ENCODE measurements at regions of chr11 and their contacts with region 1.

Region 1: GRCh38 chr11:61733120-61733978 is 19.1 kb upstream of the MYRF start:
- DNase-seq: peak in 1 of 2 experiments; percentile 89
- H3K4me3 ChIP-seq: no peak overlapping the region
- H3K27ac ChIP-seq: no peak overlapping the region
- H3K4me1 ChIP-seq: no peaks in the 10 kb centered on the region
- H3K27me3 ChIP-seq: no peaks in the 10 kb centered on the region
- CTCF ChIP-seq: peak in 2 of 3 experiments; percentile 96 to 99; a peak in 3 of 4 replicates
- EP300 ChIP-seq: no peak
- POLR2A ChIP-seq: no peak
- RAD21 ChIP-seq: peak; percentile 94 to 97

Region 2: GRCh38 chr11:61503212-61503770 is 230.1 kb before region 1 on chr11:
- CTCF ChIA-PET with region 1: no interaction called
- POLR2A ChIA-PET with region 1: no interaction called
- DNase-seq: no peak
- H3K4me3 ChIP-seq: no peak overlapping the region
- H3K27ac ChIP-seq: no peak overlapping the region
- H3K4me1 ChIP-seq: peaks cover 9 to 26% (median 17%) of the 10 kb centered on the region in 4 experiments
- H3K27me3 ChIP-seq: peaks cover 5 to 31% (median 26%) of the 10 kb centered on the region in 4 experiments
- CTCF ChIP-seq: no peak
- EP300 ChIP-seq: no peak
- POLR2A ChIP-seq: no peak
- RAD21 ChIP-seq: no peak

Region 3: DNA sequence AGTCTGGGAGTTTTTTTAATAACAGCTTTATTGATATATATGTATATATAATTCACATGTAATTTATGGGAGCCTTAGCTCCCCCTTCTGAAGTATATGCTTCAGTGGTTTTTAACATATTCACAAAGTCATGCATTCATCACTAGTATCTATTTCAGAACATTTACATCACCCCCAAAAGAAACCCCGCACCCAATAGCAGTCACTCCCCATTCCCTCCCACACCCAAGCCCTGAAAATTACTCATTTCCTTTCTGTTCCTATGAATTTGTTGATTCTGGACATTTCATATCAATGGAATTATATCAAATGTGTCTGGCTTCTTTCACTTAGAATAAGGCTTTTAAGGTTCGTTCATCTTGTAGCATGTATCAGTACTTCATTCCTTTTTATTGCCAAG is 116.9 kb before region 1 on chr11:
- CTCF ChIA-PET with region 1: no interaction called
- POLR2A ChIA-PET with region 1: no interaction called
- DNase-seq: no peak
- H3K4me3 ChIP-seq: no peak overlapping the region
- H3K27ac ChIP-seq: no peak overlapping the region
- H3K4me1 ChIP-seq: no peaks in the 10 kb centered on the region; a peak in 1 of 7 replicates
- H3K27me3 ChIP-seq: no peaks in the 10 kb centered on the region
- CTCF ChIP-seq: no peak
- EP300 ChIP-seq: no peak
- POLR2A ChIP-seq: no peak
- RAD21 ChIP-seq: no peak

Region 4: GRCh38 chr11:61671527-61671926 is 61.8 kb before region 1 on chr11:
- CTCF ChIA-PET with region 1: interaction called, 18 read pairs
- POLR2A ChIA-PET with region 1: no interaction called
- DNase-seq: no peak
- H3K4me3 ChIP-seq: no peak overlapping the region
- H3K27ac ChIP-seq: no peak overlapping the region
- H3K4me1 ChIP-seq: peaks cover 0 to 3% (median under 1%) of the 10 kb centered on the region in 4 experiments; a peak in 2 of 7 replicates
- H3K27me3 ChIP-seq: no peaks in the 10 kb centered on the region; a peak in 2 of 7 replicates
- CTCF ChIP-seq: peak; percentile 78 to 88 (median 84)
- EP300 ChIP-seq: no peak
- POLR2A ChIP-seq: no peak
- RAD21 ChIP-seq: peak; percentile 42 to 53; a peak in 3 of 4 replicates

Region 5: GRCh38 chr11:61688365-61689163 is 44.8 kb before region 1 on chr11:
- CTCF ChIA-PET with region 1: interaction called, 37 read pairs
- POLR2A ChIA-PET with region 1: no interaction called
- DNase-seq: no peak
- H3K4me3 ChIP-seq: no peak overlapping the region
- H3K27ac ChIP-seq: no peak overlapping the region
- H3K4me1 ChIP-seq: peaks cover 0 to 16% (median 10%) of the 10 kb centered on the region in 4 experiments; a peak in 4 of 7 replicates
- H3K27me3 ChIP-seq: no peaks in the 10 kb centered on the region; a peak in 1 of 7 replicates
- CTCF ChIP-seq: no peak
- EP300 ChIP-seq: no peak
- POLR2A ChIP-seq: no peak
- RAD21 ChIP-seq: no peak

Region 6: DNA sequence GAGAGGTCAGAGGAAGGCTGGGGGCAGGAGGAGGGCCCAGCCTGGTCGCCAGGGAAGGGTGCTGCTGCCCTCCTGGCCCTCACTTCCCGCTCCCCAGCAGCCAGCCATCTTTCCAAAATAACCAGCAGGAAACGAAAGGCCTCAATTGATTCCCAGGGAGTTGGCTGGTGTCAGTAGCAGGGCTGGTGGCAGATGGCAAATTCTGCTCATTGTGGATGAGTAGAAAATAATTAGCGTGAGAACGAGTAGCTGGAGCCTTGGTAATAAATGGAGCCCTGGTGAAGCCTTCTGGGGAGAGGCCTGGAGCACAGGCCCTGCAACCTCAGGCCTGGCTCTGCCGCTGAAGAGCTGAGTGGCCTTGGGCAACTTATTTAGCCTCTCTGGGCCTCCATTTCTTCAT is 21.9 kb before region 1 on chr11:
- CTCF ChIA-PET with region 1: interaction called, 47 read pairs
- POLR2A ChIA-PET with region 1: no interaction called
- DNase-seq: no peak
- H3K4me3 ChIP-seq: no peak overlapping the region
- H3K27ac ChIP-seq: no peak overlapping the region
- H3K4me1 ChIP-seq: peaks cover 0 to 20% (median 11%) of the 10 kb centered on the region in 4 experiments; a peak in 5 of 7 replicates
- H3K27me3 ChIP-seq: no peaks in the 10 kb centered on the region
- CTCF ChIP-seq: no peak
- EP300 ChIP-seq: no peak
- POLR2A ChIP-seq: no peak
- RAD21 ChIP-seq: no peak

Region 7: DNA sequence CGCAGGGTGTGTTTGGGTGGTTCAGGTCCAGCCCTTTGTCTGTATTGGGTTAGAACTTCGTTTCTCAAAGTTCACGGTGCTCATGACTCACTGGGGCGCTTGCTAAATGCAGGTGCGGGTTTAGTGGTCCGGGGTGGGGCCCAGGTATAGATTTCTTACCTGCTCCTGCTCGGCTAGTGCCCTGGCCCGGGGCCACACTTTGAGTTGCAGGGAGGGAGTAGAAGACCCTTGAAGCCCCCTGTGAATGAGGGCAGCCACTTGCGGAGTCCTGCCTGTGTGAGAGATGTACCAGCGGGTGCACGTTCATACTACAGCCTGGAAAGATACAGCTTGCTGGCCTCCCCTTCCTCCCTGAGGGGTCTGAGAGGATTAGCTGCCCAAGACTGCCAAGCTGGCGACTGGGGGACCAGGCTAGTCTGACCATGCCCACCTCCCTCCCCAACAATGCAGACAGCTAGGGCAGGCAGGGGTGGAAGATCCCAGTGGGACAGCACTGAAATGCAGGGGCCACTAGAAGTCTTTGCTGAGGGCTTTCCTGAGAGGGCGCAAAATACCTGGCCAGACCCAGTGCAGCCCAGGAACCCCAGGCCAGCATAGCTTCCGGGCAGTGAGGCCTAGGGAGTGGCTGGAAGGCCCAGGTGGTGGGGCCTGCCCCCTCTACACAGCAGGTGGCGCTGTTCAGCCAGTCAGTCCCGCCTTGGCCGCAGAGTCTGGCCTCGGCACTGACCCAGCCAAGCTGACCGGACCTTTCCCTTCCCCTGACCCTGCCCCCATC is 14.0 kb after region 1 on chr11:
- CTCF ChIA-PET with region 1: interaction called, 110 read pairs
- POLR2A ChIA-PET with region 1: interaction called, 6 read pairs
- DNase-seq: peak; percentile 41 to 94
- H3K4me3 ChIP-seq: no peak overlapping the region
- H3K27ac ChIP-seq: no peak overlapping the region
- H3K4me1 ChIP-seq: peaks cover 6 to 26% (median 10%) of the 10 kb centered on the region in 4 experiments
- H3K27me3 ChIP-seq: peaks cover 0 to 6% (median 5%) of the 10 kb centered on the region in 4 experiments; a peak in 5 of 7 replicates
- CTCF ChIP-seq: peak in 2 of 3 experiments; percentile 87 to 95; a peak in 3 of 4 replicates
- EP300 ChIP-seq: no peak
- POLR2A ChIP-seq: no peak
- RAD21 ChIP-seq: peak; percentile 71 to 78

Region 8: GRCh38 chr11:61860054-61860903 is 126.9 kb after region 1 on chr11:
- CTCF ChIA-PET with region 1: no interaction called
- POLR2A ChIA-PET with region 1: no interaction called
- DNase-seq: no peak
- H3K4me3 ChIP-seq: no peak overlapping the region
- H3K27ac ChIP-seq: no peak overlapping the region
- H3K4me1 ChIP-seq: no peaks in the 10 kb centered on the region
- H3K27me3 ChIP-seq: no peaks in the 10 kb centered on the region
- CTCF ChIP-seq: no peak
- EP300 ChIP-seq: no peak
- POLR2A ChIP-seq: no peak
- RAD21 ChIP-seq: no peak